GM13976 (cell line): ENCODE measurements at regions of chr4 and their contacts with region 1.

Region 1: GRCh38 chr4:103915224-103915869 is 195.6 kb upstream of the TACR3 start:
- DNase-seq: peak; percentile 35
- CTCF ChIP-seq: peak; percentile 39

Region 2: GRCh38 chr4:103498161-103499070 is 416.9 kb before region 1 on chr4:
- in situ Hi-C with region 1: loop called (anchors 25 kb)
- DNase-seq: peak; percentile 34
- CTCF ChIP-seq: no peak